ENCODE measurements at regions of chr6 and their contacts with region 1.

Region 1: GRCh38 chr6:53484476-53485280 is 60.2 kb downstream of the GCLC start:
- DNase-seq: peak; percentile 79 to 90 (median 84)
- H3K4me3 ChIP-seq: no peak overlapping the region
- H3K27ac ChIP-seq: no peak overlapping the region
- H3K4me1 ChIP-seq: peaks cover 7 to 26% (median 23%) of the 10 kb centered on the region in 4 experiments
- H3K27me3 ChIP-seq: no peaks in the 10 kb centered on the region

Region 2: GRCh38 chr6:53103992-53104675 is 380.5 kb before region 1 on chr6:
- CTCF ChIA-PET with region 1: interaction called, 10 read pairs
- POLR2A ChIA-PET with region 1: no interaction called
- DNase-seq: peak; percentile 27 to 59 (median 54)
- H3K4me3 ChIP-seq: no peak overlapping the region
- H3K27ac ChIP-seq: no peak overlapping the region
- H3K4me1 ChIP-seq: no peaks in the 10 kb centered on the region
- H3K27me3 ChIP-seq: no peaks in the 10 kb centered on the region

Region 3: GRCh38 chr6:53171605-53172446 is 312.9 kb before region 1 on chr6:
- CTCF ChIA-PET with region 1: interaction called, 93 read pairs
- POLR2A ChIA-PET with region 1: no interaction called
- DNase-seq: peak; percentile 76 to 87 (median 80)
- H3K4me3 ChIP-seq: no peak overlapping the region
- H3K27ac ChIP-seq: no peak overlapping the region
- H3K4me1 ChIP-seq: no peaks in the 10 kb centered on the region
- H3K27me3 ChIP-seq: no peaks in the 10 kb centered on the region

Region 4: GRCh38 chr6:53300656-53301551 is 183.8 kb before region 1 on chr6:
- CTCF ChIA-PET with region 1: interaction called, 15 read pairs
- POLR2A ChIA-PET with region 1: no interaction called
- DNase-seq: peak; percentile 80 to 95 (median 92)
- H3K4me3 ChIP-seq: peak overlapping the region in 2 of 7 experiments; percentile 26 to 34
- H3K27ac ChIP-seq: no peak overlapping the region
- H3K4me1 ChIP-seq: peaks cover 39 to 58% (median 50%) of the 10 kb centered on the region in 4 experiments
- H3K27me3 ChIP-seq: no peaks in the 10 kb centered on the region

Region 5: GRCh38 chr6:53359072-53359842 is 125.4 kb before region 1 on chr6:
- CTCF ChIA-PET with region 1: no interaction called
- POLR2A ChIA-PET with region 1: no interaction called
- DNase-seq: peak; percentile 88 to 94 (median 93)
- H3K4me3 ChIP-seq: peak overlapping the region; percentile 46 to 82 (median 68)
- H3K27ac ChIP-seq: peak overlapping the region; percentile 95 to 96
- H3K4me1 ChIP-seq: peaks cover 10 to 39% (median 34%) of the 10 kb centered on the region in 4 experiments
- H3K27me3 ChIP-seq: no peaks in the 10 kb centered on the region

Region 6: GRCh38 chr6:53474010-53474409 is 10.7 kb before region 1 on chr6:
- CTCF ChIA-PET with region 1: interaction called, 12 read pairs
- POLR2A ChIA-PET with region 1: no interaction called
- DNase-seq: peak in 1 of 3 donors; percentile 6
- H3K4me3 ChIP-seq: no peak overlapping the region
- H3K27ac ChIP-seq: no peak overlapping the region
- H3K4me1 ChIP-seq: no peaks in the 10 kb centered on the region
- H3K27me3 ChIP-seq: peaks cover 0 to 2% (median 0%) of the 10 kb centered on the region in 5 experiments

Measured in common myeloid progenitor, CD34-positive (primary cell).